Mammary epithelial cell (primary cell): ENCODE measurements at regions of chr4 and their contacts with region 1.

Region 1: GRCh38 chr4:20847124-20847747 is 147.0 kb downstream of the PACRGL start:
- DNase-seq: peak; percentile 76
- H3K4me3 ChIP-seq: no peak overlapping the region
- H3K27ac ChIP-seq: peak overlapping the region; percentile 3
- H3K4me1 ChIP-seq: peaks cover 15% of the 10 kb centered on the region
- H3K27me3 ChIP-seq: no peaks in the 10 kb centered on the region
- CTCF ChIP-seq: no peak

Region 2: DNA sequence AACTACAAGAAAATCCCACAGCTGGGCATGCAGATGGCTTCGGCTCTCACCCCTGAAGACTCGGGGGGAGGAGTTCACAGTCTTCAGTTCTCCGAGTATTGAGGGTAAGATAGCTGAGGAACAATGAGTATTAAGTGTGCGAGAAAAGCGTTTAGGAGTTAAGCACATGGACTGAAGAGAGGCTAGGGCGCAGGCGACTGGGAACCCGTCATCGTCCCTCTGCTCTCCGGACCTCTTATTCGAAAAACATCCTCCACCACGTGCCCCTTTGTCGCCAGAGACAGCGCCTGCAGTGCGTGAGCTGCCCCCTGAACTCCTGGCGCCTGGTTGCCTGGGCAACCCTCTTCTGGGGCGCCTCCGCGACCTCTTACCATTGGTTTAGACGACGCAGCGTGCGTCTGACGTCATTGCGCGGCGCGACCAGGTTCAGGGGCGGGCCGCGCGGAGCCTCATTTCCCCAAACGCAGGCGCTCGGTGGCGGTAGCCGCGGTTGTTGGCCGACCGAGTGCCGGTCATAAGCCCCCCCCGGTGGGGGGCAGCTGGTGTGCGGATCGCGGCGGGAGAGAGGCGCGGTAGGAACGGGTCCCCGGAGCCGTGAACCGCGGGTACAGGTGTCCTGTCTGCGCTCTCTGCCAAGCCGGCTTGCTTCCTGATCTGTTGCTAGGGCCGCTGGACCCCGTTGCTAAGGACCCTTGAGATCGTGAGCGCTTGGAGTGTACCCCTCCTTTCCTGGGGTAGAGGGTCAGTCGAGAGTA is 147.1 kb before region 1 on chr4 and contains the start of gene PACRGL:
- CTCF ChIA-PET with region 1: no interaction called
- dilution Hi-C with region 1: no loop called
- in situ Hi-C with region 1: no loop called
- intact Hi-C with region 1: loop called (anchors 5 kb)
- DNase-seq: peak; percentile 88
- H3K4me3 ChIP-seq: peak within 1 kb of the TSS; percentile 75 to 98 (median 92)
- H3K27ac ChIP-seq: peak within 1 kb of the TSS; percentile 79
- H3K4me1 ChIP-seq: peaks cover 11% of the 10 kb centered on the region
- H3K27me3 ChIP-seq: no peaks in the 10 kb centered on the region
- CTCF ChIP-seq: no peak
- total RNA-seq, gene PACRGL: 16.0 to 29.2 TPM

Region 3: DNA sequence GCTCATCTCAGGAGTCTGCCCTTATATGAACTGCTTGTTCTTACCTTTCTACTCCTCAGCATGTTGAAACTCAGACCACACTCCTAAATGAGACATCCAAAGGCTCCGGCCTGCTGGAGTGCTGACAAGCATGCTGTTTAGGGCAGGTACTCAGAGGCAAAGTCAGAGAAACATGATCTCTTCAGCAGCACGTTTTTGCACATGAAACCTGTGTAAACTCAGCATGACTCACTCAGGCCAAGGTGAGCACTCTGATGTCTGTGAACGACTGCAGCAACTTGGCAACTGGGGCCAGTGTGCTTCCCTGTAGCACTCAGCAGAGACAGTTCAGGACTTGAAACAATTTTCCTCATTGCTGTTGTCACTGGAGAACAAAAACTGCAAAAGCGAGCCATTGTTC is 37.4 kb before region 1 on chr4:
- CTCF ChIA-PET with region 1: no interaction called
- dilution Hi-C with region 1: no loop called
- in situ Hi-C with region 1: no loop called
- intact Hi-C with region 1: loop called (anchors 2 kb)
- DNase-seq: peak; percentile 96
- H3K4me3 ChIP-seq: no peak overlapping the region
- H3K27ac ChIP-seq: no peak overlapping the region
- H3K4me1 ChIP-seq: peaks cover 9% of the 10 kb centered on the region
- H3K27me3 ChIP-seq: no peaks in the 10 kb centered on the region
- CTCF ChIP-seq: no peak